Caco-2 (cell line): ENCODE measurements at regions of chr2 and their contacts with region 1.

Region 1: DNA sequence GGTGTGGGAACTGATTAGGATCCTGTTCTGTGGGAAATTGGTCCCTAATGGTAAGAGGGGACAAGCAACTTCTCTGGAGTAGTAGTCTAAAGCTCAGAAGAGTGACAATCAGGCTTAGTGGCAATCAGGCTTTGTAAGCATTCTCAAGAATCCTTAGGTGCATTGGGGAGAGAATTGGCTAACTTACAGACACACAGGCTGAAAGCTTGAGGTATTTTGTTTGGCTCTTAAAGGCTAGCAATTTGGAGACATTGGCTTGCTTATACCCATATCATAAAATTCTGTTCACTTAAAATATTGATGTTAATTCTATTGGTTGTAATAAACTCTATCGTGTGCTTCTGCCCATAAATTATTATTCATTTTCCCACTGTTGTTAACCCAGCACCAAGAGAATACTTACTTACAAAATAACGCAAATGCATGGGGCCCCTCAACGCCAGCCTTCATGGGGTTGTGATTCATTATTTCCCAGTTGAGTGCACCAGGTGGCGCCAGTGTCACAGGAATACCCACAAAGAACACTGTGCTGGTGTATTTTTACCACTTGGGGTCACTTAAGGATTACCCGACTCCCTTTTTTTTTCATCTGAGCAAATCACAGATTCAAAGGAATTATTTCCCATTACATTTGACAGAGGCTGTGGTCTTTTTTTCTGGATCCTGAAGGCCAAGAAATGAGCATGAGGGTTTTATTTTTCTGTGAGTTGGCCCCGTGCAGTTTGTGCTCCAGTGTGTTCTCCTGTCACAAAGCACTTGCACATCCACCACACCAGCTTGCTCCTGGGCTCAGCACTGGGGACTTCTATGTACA is 45.5 kb downstream of the DDX1 start:
- DNase-seq: peak; percentile 72 to 80
- H3K4me3 ChIP-seq: no peak overlapping the region
- H3K4me3 Mint-ChIP-seq: no peak overlapping the region
- H3K27ac Mint-ChIP-seq: no peak overlapping the region
- H3K4me1 ChIP-seq: peaks cover 55% of the 10 kb centered on the region
- H3K4me1 Mint-ChIP-seq: peaks cover 32% of the 10 kb centered on the region
- H3K27me3 ChIP-seq: no peaks in the 10 kb centered on the region
- H3K27me3 Mint-ChIP-seq: no peaks in the 10 kb centered on the region
- CTCF ChIP-seq: peak; percentile 85 to 98

Region 2: GRCh38 chr2:14016289-14016955 is 1620.8 kb before region 1 on chr2:
- CTCF ChIA-PET with region 1: no interaction called
- POLR2A ChIA-PET with region 1: no interaction called
- intact Hi-C with region 1: no loop called
- DNase-seq: no peak
- H3K4me3 ChIP-seq: no peak overlapping the region
- H3K4me3 Mint-ChIP-seq: no peak overlapping the region
- H3K27ac Mint-ChIP-seq: no peak overlapping the region
- H3K4me1 ChIP-seq: no peaks in the 10 kb centered on the region
- H3K4me1 Mint-ChIP-seq: no peaks in the 10 kb centered on the region
- H3K27me3 ChIP-seq: no peaks in the 10 kb centered on the region
- H3K27me3 Mint-ChIP-seq: no peaks in the 10 kb centered on the region
- CTCF ChIP-seq: no peak

Region 3: DNA sequence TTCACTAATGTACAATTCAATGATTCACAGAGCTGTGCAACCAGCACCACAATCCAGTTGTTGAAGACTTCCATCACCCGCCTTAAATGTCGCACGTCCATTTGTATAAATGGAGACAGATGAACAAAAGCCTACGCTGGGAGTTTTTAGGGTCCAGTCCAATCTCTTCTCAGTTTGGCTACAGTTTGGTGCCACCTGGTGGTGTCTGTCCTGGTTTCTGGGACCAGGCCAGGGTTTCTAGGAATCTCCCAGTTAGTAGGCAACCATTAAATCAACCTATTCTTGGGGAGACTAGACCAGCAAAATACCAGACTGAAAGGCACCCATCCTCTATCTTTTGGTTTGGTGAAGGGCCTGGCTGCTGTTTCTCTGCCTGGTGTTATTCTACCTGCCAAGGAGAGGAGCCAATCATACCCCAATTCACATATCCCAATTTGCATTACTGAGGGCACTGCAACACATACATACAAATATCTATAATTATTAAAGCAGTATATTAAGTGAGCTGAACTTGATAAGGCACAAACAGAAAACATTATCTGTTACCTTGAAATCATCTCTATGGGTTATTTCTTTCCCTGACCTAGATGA is 48.8 kb before region 1 on chr2:
- CTCF ChIA-PET with region 1: no interaction called
- POLR2A ChIA-PET with region 1: no interaction called
- intact Hi-C with region 1: no loop called
- DNase-seq: peak; percentile 58 to 77
- H3K4me3 ChIP-seq: no peak overlapping the region
- H3K4me3 Mint-ChIP-seq: no peak overlapping the region
- H3K27ac Mint-ChIP-seq: no peak overlapping the region
- H3K4me1 ChIP-seq: peaks cover 4% of the 10 kb centered on the region; the same call in 1 of the 2 replicates
- H3K4me1 Mint-ChIP-seq: peaks cover 7% of the 10 kb centered on the region
- H3K27me3 ChIP-seq: no peaks in the 10 kb centered on the region
- H3K27me3 Mint-ChIP-seq: no peaks in the 10 kb centered on the region
- CTCF ChIP-seq: peak; percentile 46 to 84

Region 4: GRCh38 chr2:15730545-15731212 is 93.5 kb after region 1 on chr2:
- CTCF ChIA-PET with region 1: no interaction called
- POLR2A ChIA-PET with region 1: no interaction called
- intact Hi-C with region 1: loop called (anchors 1 kb)
- DNase-seq: no peak
- H3K4me3 ChIP-seq: no peak overlapping the region
- H3K4me3 Mint-ChIP-seq: no peak overlapping the region
- H3K27ac Mint-ChIP-seq: no peak overlapping the region
- H3K4me1 ChIP-seq: peaks cover 42% of the 10 kb centered on the region
- H3K4me1 Mint-ChIP-seq: peaks cover 49% of the 10 kb centered on the region
- H3K27me3 ChIP-seq: no peaks in the 10 kb centered on the region
- H3K27me3 Mint-ChIP-seq: no peaks in the 10 kb centered on the region
- CTCF ChIP-seq: no peak

Region 5: DNA sequence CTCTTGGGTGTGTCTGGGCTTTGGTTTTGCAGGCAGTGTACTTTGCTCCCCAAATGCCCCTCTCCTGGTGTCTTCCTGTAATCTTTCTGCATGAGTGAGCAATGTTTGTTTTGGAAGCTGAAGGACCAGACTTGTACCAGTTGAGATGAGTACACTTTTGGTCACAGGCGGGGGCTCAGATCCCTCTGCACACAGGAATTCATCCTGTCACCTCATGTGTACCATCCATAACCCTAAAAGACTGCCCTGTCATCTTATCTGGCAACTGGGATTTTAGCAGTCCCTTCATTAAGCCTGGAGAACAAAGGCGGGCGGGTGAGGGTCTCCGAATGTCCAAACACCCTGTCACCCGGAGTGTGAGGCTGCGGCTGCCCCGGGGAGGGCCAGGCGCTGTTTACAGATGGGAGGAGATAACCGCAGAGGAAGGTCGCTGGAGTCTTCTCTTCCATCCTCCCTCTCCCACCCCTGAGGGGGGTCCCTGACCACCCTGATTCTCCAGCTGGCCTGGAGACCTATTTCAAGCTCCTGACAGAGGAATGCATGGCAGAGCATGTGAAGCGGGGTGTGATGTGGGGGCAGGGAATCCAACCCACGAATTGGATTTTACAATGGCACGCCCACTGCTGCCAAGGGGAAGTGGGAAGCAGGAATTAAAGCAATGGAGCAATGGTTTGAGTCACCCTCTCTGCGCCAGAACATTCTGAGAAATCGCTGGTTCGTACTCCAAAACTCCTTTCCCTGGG is 145.0 kb after region 1 on chr2:
- CTCF ChIA-PET with region 1: interaction called, 4 read pairs
- POLR2A ChIA-PET with region 1: no interaction called
- intact Hi-C with region 1: loop called (anchors 1 kb)
- DNase-seq: peak; percentile 92 to 95
- H3K4me3 ChIP-seq: no peak overlapping the region
- H3K4me3 Mint-ChIP-seq: peak overlapping the region; percentile 31
- H3K27ac Mint-ChIP-seq: peak overlapping the region; percentile 17
- H3K4me1 ChIP-seq: peaks cover 44% of the 10 kb centered on the region
- H3K4me1 Mint-ChIP-seq: peaks cover 45% of the 10 kb centered on the region
- H3K27me3 ChIP-seq: no peaks in the 10 kb centered on the region
- H3K27me3 Mint-ChIP-seq: no peaks in the 10 kb centered on the region
- CTCF ChIP-seq: no peak

Region 6: GRCh38 chr2:16104949-16105668 is 467.9 kb after region 1 on chr2:
- CTCF ChIA-PET with region 1: no interaction called
- POLR2A ChIA-PET with region 1: no interaction called
- intact Hi-C with region 1: loop called (anchors 5 kb)
- DNase-seq: no peak
- H3K4me3 ChIP-seq: no peak overlapping the region
- H3K4me3 Mint-ChIP-seq: no peak overlapping the region
- H3K27ac Mint-ChIP-seq: peak overlapping the region; percentile 48
- H3K4me1 ChIP-seq: peaks cover 67% of the 10 kb centered on the region
- H3K4me1 Mint-ChIP-seq: peaks cover 52% of the 10 kb centered on the region
- H3K27me3 ChIP-seq: no peaks in the 10 kb centered on the region
- H3K27me3 Mint-ChIP-seq: no peaks in the 10 kb centered on the region
- CTCF ChIP-seq: no peak

Region 7: GRCh38 chr2:16487686-16488085 is 850.5 kb after region 1 on chr2:
- CTCF ChIA-PET with region 1: no interaction called
- POLR2A ChIA-PET with region 1: no interaction called
- intact Hi-C with region 1: loop called (anchors 2 kb)
- DNase-seq: peak; percentile 42 to 50
- H3K4me3 ChIP-seq: no peak overlapping the region
- H3K4me3 Mint-ChIP-seq: no peak overlapping the region
- H3K27ac Mint-ChIP-seq: peak overlapping the region; percentile 31
- H3K4me1 ChIP-seq: no peaks in the 10 kb centered on the region
- H3K4me1 Mint-ChIP-seq: peaks cover 16% of the 10 kb centered on the region
- H3K27me3 ChIP-seq: no peaks in the 10 kb centered on the region
- H3K27me3 Mint-ChIP-seq: no peaks in the 10 kb centered on the region
- CTCF ChIP-seq: peak; percentile 34 to 59

Region 8: GRCh38 chr2:16756831-16757644 is 1119.9 kb after region 1 on chr2:
- CTCF ChIA-PET with region 1: no interaction called
- POLR2A ChIA-PET with region 1: no interaction called
- intact Hi-C with region 1: loop called (anchors 10 kb)
- DNase-seq: peak; percentile 67 to 80
- H3K4me3 ChIP-seq: no peak overlapping the region
- H3K4me3 Mint-ChIP-seq: no peak overlapping the region
- H3K27ac Mint-ChIP-seq: no peak overlapping the region
- H3K4me1 ChIP-seq: no peaks in the 10 kb centered on the region
- H3K4me1 Mint-ChIP-seq: peaks cover 5% of the 10 kb centered on the region
- H3K27me3 ChIP-seq: no peaks in the 10 kb centered on the region
- H3K27me3 Mint-ChIP-seq: peaks cover 17% of the 10 kb centered on the region
- CTCF ChIP-seq: peak; percentile 85 to 97